ENCODE measurements at regions of chr22 and their contacts with region 1.

Region 1: DNA sequence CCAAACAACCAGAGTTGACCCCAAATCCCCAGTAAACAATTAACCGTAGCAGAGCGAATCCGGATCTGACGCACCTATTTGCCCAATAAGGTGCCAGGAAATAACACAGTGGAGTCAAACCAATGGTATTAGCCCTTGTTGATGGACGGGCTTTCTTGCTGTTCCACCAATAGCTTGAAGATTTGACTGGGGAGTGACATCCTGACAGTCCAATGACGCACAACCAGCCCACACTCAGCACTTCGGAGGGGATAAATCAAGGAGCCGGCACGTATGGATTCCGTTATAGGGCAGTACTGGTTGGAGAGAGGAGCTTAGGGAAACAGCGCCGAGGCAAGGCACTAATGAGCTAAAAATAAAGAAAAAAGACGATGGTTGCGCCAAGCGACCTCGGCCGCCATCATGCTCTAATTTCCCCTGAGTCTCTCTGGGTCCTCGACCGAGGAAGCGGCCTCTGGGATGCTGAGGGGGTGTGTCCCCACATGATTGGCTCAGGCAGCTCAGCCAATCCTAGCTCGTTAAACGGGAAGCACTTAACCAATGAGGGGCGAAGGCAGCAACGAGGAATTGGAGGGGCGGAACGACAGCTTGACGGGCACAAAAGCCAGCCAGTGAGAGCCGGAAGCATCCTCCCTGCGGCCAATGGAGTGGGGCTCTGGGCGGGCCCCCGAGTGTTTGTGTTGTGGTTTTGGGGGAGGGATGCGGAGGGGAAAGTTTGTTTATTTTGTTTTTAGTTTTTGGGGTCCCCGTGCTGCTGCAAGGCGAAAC is 49.5 kb downstream of the FAM83F start:
- DNase-seq: peak; percentile 97 to 98 (median 98)
- ATAC-seq: peak; percentile 96 to 98 (median 96)
- H3K4me3 ChIP-seq: peak overlapping the region; percentile 36 to 97 (median 82)
- H3K27ac ChIP-seq: peak overlapping the region; percentile 86 to 98 (median 93)
- H3K4me1 ChIP-seq: peaks cover 3 to 48% (median 26%) of the 10 kb centered on the region in 12 donors
- H3K27me3 ChIP-seq: no peaks in the 10 kb centered on the region
- CTCF ChIP-seq: no peak
- POLR2A ChIP-seq: peak; percentile 48 to 61

Region 2: GRCh38 chr22:38398609-38399461 is 1645.5 kb before region 1 on chr22:
- intact Hi-C with region 1: no loop called
- DNase-seq: peak; percentile 87 to 95 (median 89)
- ATAC-seq: peak; percentile 76 to 92 (median 90)
- H3K4me3 ChIP-seq: peak overlapping the region; percentile 67 to 100 (median 92)
- H3K27ac ChIP-seq: peak overlapping the region; percentile 92 to 100 (median 98)
- H3K4me1 ChIP-seq: peaks cover 0 to 38% (median 15%) of the 10 kb centered on the region in 12 donors
- H3K27me3 ChIP-seq: no peaks in the 10 kb centered on the region
- CTCF ChIP-seq: peak in 2 of 12 donors; percentile 15 to 28
- POLR2A ChIP-seq: peak; percentile 85 to 90

Region 3: DNA sequence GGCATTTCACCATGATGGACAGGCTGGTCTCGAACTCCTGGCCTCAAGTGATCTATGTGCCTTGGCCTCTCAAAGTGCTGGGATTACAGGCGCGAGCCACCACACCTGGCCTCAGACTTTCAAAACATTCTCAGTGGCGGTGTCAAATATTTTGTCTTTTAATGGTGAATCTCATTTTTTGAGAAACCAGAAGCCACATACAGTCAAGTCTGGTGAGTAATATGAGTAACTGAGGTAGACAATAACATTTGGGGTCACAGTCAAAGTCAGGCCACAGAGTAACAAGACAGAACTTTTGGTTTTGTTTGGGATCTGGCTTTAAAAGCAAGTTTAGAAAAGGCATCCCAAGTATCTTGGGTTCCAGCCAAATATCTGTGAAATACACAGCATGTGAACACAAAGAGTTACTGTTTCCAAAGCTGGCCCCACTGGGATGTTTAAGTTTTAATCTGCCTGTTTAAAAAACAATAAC is 89.7 kb before region 1 on chr22:
- intact Hi-C with region 1: no loop called
- DNase-seq: no peak
- ATAC-seq: no peak
- H3K4me3 ChIP-seq: no peak overlapping the region
- H3K27ac ChIP-seq: no peak overlapping the region
- H3K4me1 ChIP-seq: peaks cover 0 to 17% (median 0%) of the 10 kb centered on the region in 12 donors
- H3K27me3 ChIP-seq: peaks cover 0 to 13% (median 0%) of the 10 kb centered on the region in 9 donors
- CTCF ChIP-seq: no peak
- POLR2A ChIP-seq: no peak

Region 4: GRCh38 chr22:40076702-40077645 is 32.7 kb after region 1 on chr22:
- intact Hi-C with region 1: no loop called
- DNase-seq: no peak
- ATAC-seq: peak in 1 of 4 donors; percentile 20
- H3K4me3 ChIP-seq: no peak overlapping the region
- H3K27ac ChIP-seq: no peak overlapping the region
- H3K4me1 ChIP-seq: peaks cover 0 to 37% (median 12%) of the 10 kb centered on the region in 12 donors
- H3K27me3 ChIP-seq: no peaks in the 10 kb centered on the region
- CTCF ChIP-seq: no peak
- POLR2A ChIP-seq: no peak

Region 5: GRCh38 chr22:40177738-40178416 is 133.6 kb after region 1 on chr22 and contains the start of gene TNRC6B:
- intact Hi-C with region 1: loop called in 5 of 10 experiments (anchors 2 to 5 kb)
- DNase-seq: peak in 4 of 5 donors; percentile 69 to 89 (median 82)
- ATAC-seq: peak; percentile 97 to 98 (median 98)
- H3K4me3 ChIP-seq: peak within 1 kb of the TSS; percentile 57 to 88 (median 70)
- H3K27ac ChIP-seq: peak within 1 kb of the TSS; percentile 67 to 96 (median 82)
- H3K4me1 ChIP-seq: peaks cover 11 to 66% (median 56%) of the 10 kb centered on the region in 12 donors
- H3K27me3 ChIP-seq: no peaks in the 10 kb centered on the region
- CTCF ChIP-seq: no peak
- POLR2A ChIP-seq: peak; percentile 85 to 95
- total RNA-seq, gene TNRC6B: 32.7 to 62.4 (median 41.1) TPM

Region 6: DNA sequence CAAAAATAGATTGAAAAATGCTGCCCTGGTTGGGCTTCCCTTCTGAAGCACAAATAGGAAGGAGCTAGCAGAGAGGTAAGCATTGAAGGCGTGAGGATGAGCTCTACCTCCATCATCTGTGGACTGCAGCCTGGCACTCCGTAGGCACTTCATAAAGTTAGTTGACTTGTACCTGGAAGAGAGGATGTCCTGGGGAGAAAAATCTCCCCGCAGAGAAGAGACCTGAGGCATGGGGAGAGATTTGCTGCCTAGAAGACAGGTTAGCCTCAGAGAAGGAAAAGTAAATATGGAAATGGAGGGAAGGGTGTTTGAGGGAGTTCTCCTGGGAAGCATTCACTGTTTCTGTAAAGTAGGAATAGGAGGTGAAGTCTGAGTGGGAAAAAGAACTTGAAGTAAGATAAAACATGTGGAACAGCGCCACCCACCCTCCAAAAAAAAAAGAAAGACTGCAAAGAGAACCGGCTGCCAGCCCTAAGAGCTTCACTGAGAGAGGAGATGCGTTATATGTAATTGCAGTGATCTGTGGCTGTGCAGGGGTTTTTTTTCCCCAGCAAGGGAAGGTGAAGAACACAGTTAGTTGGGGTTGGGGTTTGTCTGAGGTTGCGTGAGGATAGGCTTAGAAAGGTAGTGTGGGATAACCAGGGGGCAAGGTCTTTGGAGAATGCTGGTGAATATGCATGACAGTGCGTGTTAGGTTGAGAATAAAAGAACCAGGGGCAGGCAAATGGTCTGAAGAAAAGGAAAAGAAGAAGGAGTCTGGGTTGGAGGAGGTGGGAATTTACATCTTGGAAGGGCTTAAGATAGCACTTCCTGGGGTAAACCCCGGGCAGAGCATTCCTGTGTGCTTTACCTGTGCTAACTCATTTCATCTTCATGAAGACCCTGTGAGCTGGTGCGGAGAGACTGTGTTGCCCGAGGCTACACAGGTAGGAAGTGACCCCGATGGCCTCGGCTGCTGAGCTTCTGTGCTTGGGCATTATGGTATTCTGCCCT is 149.4 kb after region 1 on chr22:
- intact Hi-C with region 1: loop called in 1 of 10 experiments (anchors 10 kb)
- DNase-seq: no peak
- ATAC-seq: peak in 1 of 4 donors; percentile 31
- H3K4me3 ChIP-seq: no peak overlapping the region
- H3K27ac ChIP-seq: peak overlapping the region in 1 of 12 donors; percentile 53
- H3K4me1 ChIP-seq: peaks cover 0 to 89% (median 68%) of the 10 kb centered on the region in 12 donors
- H3K27me3 ChIP-seq: no peaks in the 10 kb centered on the region
- CTCF ChIP-seq: peak in 10 of 12 donors; percentile 7 to 48 (median 29)
- POLR2A ChIP-seq: no peak

Region 7: DNA sequence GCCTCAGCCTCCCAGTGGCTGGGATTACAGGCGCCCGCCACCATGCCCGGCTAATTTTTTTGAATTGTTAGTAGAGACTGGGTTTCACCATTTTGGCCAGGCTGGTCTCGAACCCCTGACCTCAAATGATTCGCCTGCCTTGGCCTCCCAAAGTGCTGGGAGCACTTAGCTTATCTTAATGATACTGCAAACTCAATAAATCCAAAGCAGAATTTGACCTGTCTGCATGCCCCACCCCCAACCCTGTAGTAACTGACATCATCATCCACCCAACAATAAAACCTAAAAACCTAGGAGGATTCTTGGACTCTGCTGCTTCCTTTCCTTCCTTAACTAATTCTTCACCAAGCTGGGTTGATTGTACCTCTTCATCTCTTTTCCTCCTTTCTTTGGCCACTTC is 295.8 kb after region 1 on chr22:
- intact Hi-C with region 1: loop called in 8 of 10 experiments (anchors 5 to 10 kb)
- DNase-seq: no peak
- ATAC-seq: no peak
- H3K4me3 ChIP-seq: no peak overlapping the region
- H3K27ac ChIP-seq: no peak overlapping the region
- H3K4me1 ChIP-seq: peaks cover 0 to 18% (median 0%) of the 10 kb centered on the region in 12 donors
- H3K27me3 ChIP-seq: no peaks in the 10 kb centered on the region
- CTCF ChIP-seq: no peak
- POLR2A ChIP-seq: no peak

Region 8: DNA sequence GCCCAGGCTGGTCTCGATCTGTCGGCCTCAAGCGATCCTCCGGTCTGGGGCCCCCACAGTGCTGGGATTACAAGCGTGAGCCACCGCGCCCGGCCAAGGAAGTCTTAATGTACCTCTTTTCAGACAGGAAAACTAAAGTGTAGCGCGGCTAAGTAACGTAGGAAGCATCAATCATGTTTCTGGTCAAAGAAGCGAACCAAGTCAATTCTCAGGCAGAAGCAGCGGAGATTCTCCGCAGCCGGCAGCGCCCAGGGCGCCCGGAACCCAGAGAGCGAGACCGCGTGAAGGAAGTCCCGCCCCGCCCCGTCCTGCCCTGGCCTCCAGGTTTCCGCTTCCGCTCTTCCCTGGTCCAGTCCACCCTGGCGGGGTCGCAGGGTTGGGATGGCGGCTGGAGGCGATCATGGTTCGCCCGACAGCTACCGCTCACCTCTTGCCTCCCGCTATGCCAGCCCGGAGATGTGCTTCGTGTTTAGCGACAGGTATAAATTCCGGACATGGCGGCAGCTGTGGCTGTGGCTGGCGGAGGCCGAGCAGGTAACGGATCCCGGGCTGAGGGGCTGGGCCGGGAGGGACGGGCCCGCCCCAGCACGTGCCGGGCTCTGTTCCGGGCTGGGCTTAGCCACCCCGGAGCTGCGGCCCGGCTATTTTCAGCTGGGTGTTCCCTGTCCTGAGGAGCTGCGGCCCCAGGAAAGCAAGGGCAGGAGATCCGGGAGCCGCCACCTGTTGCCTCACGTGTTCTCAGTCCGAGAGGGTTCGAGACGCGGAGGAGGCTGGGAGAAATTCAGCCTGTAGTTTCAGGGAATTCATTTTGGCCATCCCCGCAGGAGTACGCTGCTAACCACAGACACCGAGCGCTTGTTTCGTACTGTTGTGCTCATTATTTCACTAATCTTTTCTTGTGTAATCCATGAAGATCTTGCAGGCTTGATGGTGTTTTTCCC is 302.2 kb after region 1 on chr22 and contains the start of gene ADSL:
- intact Hi-C with region 1: loop called in 9 of 10 experiments (anchors 2 to 10 kb)
- DNase-seq: peak; percentile 90 to 93 (median 93)
- ATAC-seq: peak; percentile 95 to 98 (median 98)
- H3K4me3 ChIP-seq: peak within 1 kb of the TSS; percentile 49 to 85 (median 76)
- H3K27ac ChIP-seq: peak within 1 kb of the TSS; percentile 23 to 92 (median 90)
- H3K4me1 ChIP-seq: peaks cover 0 to 33% (median 16%) of the 10 kb centered on the region in 12 donors
- H3K27me3 ChIP-seq: no peaks in the 10 kb centered on the region
- CTCF ChIP-seq: peak in 3 of 12 donors; percentile 11 to 30 (median 26)
- POLR2A ChIP-seq: peak in 1 of 2 donors; percentile 85
- total RNA-seq, gene ADSL: 46.9 to 87.8 (median 52.0) TPM